ENCODE measurements at regions of chr12 and their contacts with region 1.

Region 1: DNA sequence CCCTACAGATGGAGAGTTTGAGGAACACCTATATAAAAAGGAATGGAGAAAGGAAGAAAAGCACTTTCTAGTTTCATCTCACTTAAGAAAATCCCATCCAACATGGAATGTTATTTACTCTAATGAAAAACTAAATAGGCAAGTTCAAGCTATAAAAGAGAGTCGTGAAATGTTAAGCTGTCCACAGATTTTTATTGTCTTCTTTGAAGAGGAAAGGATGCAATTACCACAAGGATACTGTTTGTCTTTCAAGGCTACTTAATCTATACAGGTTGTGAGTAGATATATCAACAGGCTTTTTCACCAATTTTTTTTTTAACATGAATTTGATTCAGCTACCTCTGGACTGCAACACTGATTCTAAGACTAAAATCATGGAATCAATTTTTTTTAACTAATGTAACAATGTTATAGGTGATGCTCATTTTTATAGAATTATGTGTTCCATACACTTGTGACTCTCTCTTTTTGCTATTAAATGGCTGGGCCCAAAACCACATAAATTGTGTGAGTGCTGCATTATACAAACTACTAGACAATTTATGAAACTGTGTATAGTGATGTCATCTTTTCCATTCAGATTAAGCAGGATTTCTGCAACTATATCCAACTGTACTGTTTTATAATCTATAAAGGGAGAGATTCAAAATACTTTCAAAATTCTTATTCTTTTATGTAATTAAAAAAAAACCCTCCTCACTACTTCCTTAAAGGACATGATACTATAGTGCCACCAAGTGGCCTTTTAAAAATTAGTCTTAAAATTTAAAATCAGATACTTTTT is 26.8 kb upstream of the BMAL2 start:
- DNase-seq: no peak
- ATAC-seq: peak; percentile 49

Region 2: GRCh38 chr12:27024291-27024690 is 281.6 kb before region 1 on chr12:
- intact Hi-C with region 1: loop called (anchors 5 kb)
- DNase-seq: no peak
- ATAC-seq: no peak

Region 3: GRCh38 chr12:27523642-27524493 is 218.0 kb after region 1 on chr12 and contains the start of gene PPFIBP1:
- intact Hi-C with region 1: no loop called
- DNase-seq: peak; percentile 99
- ATAC-seq: peak; percentile 98
- total RNA-seq, gene PPFIBP1: 292 TPM